Activated CD8-positive, alpha-beta T cell treated with anti-CD3 and anti-CD28 coated beads for 36 hours (primary cell): ENCODE measurements at regions of chr7 and their contacts with region 1.

Region 1: DNA sequence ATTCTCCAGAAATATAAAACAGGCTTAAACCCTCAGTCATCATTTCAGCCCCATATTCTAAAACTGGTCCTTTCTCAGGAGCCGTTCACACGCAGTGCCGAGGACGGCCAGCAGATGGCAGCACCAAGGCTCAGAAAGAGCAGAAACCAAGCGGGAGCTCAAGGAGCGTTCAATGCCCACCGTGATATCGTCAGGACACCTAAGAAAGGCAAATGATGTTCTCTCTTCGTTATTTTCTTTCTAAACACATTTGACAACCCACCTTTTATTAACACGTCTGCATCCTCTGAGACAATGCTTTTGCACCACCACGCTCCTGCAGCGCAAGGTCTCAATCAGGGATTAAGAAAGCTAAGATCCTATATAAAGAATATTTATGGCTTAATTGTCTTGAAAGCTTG is 45.7 kb upstream of the RBM33 start:
- DNase-seq: peak; percentile 94
- ATAC-seq: peak; percentile 92
- H3K4me3 Mint-ChIP-seq: no peak overlapping the region
- H3K27ac Mint-ChIP-seq: no peak overlapping the region
- H3K4me1 Mint-ChIP-seq: peaks cover 14% of the 10 kb centered on the region
- H3K27me3 Mint-ChIP-seq: peaks cover 16% of the 10 kb centered on the region
- CTCF ChIP-seq: peak; percentile 92

Region 2: GRCh38 chr7:155584763-155585531 is 13.9 kb before region 1 on chr7:
- CTCF ChIA-PET with region 1: interaction called, 21 read pairs
- POLR2A ChIA-PET with region 1: no interaction called
- intact Hi-C with region 1: no loop called
- DNase-seq: no peak
- ATAC-seq: no peak
- H3K4me3 Mint-ChIP-seq: no peak overlapping the region
- H3K27ac Mint-ChIP-seq: no peak overlapping the region
- H3K4me1 Mint-ChIP-seq: peaks cover 9% of the 10 kb centered on the region
- H3K27me3 Mint-ChIP-seq: peaks cover 26% of the 10 kb centered on the region
- CTCF ChIP-seq: no peak

Region 3: DNA sequence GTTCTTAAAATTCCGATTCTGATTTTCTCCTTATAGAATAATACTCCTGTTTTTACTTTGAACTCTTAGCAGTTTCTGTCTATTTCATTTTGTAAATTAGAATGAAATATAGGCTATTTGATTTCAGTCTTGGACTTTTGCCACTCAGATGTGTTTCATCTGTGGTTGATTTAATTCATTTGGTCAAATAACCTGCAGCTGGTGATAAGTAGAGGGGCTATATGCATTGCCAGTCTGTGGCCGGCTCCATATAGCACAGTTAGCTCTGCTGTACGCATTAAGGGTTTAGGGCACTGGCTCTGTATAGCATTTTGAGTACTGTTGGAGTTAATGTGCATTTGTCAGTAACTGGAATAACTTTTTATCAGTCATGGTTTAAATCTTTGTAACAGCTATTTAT is 81.3 kb after region 1 on chr7:
- CTCF ChIA-PET with region 1: interaction called, 11 read pairs
- POLR2A ChIA-PET with region 1: interaction called, 3 read pairs
- intact Hi-C with region 1: no loop called
- DNase-seq: no peak
- ATAC-seq: no peak
- H3K4me3 Mint-ChIP-seq: no peak overlapping the region
- H3K27ac Mint-ChIP-seq: peak overlapping the region; percentile 60
- H3K4me1 Mint-ChIP-seq: peaks cover 68% of the 10 kb centered on the region
- H3K27me3 Mint-ChIP-seq: no peaks in the 10 kb centered on the region
- CTCF ChIP-seq: no peak

Region 4: GRCh38 chr7:155717010-155717744 is 118.4 kb after region 1 on chr7:
- CTCF ChIA-PET with region 1: interaction called, 11 read pairs
- POLR2A ChIA-PET with region 1: no interaction called
- intact Hi-C with region 1: no loop called
- DNase-seq: no peak
- ATAC-seq: no peak
- H3K4me3 Mint-ChIP-seq: no peak overlapping the region
- H3K27ac Mint-ChIP-seq: peak overlapping the region; percentile 5
- H3K4me1 Mint-ChIP-seq: peaks cover 35% of the 10 kb centered on the region
- H3K27me3 Mint-ChIP-seq: no peaks in the 10 kb centered on the region
- CTCF ChIP-seq: no peak

Region 5: DNA sequence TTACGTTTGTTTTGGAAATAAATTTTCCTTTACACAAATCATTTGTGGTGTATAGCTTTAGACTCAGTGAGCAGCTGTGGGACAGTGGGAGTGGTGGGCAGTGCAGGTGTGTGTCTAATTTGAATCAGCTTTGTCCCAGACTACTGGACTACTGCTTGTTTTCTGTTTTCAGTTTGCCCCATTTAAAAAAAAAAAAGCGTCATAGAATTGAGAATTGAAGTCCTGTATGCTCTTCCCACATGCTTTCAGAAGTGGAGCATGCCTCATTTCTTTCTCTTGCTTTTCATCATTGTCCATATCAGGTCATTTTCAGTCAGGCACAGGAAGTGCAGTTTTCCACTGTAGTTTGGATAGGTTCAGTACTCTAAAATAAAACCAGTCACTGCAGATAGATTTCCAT is 147.4 kb after region 1 on chr7:
- CTCF ChIA-PET with region 1: interaction called, 25 read pairs
- POLR2A ChIA-PET with region 1: no interaction called
- intact Hi-C with region 1: no loop called
- DNase-seq: no peak
- ATAC-seq: peak; percentile 52
- H3K4me3 Mint-ChIP-seq: no peak overlapping the region
- H3K27ac Mint-ChIP-seq: peak overlapping the region; percentile 48
- H3K4me1 Mint-ChIP-seq: peaks cover 66% of the 10 kb centered on the region
- H3K27me3 Mint-ChIP-seq: no peaks in the 10 kb centered on the region
- CTCF ChIP-seq: no peak

Region 6: DNA sequence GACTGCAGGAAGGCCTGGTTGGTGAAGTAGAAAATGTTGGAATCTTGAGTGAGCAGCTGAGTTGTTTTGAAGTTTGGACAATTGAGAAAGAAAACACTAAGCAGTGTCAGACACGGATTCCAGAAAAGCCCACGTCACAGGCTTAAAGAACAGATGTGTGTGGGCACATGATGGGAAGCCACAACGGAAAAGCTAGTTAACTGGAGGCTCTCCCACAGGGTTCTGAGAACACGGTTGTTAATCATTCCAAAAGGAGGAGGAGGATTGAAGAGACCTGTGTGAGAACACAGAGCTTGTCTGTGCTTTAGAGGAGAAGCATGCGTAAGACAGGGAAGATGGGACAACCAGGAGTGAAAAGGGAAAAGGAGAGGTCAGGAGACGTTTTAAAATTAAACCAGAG is 170.9 kb after region 1 on chr7:
- CTCF ChIA-PET with region 1: interaction called, 158 read pairs
- POLR2A ChIA-PET with region 1: interaction called, 3 read pairs
- intact Hi-C with region 1: loop called (anchors 1 kb)
- DNase-seq: no peak
- ATAC-seq: no peak
- H3K4me3 Mint-ChIP-seq: no peak overlapping the region
- H3K27ac Mint-ChIP-seq: peak overlapping the region; percentile 57
- H3K4me1 Mint-ChIP-seq: peaks cover 18% of the 10 kb centered on the region
- H3K27me3 Mint-ChIP-seq: no peaks in the 10 kb centered on the region
- CTCF ChIP-seq: no peak